Activated T-helper 1 cell treated with anti-CD3 and anti-CD28 coated beads, Interleukin-12 subunit alpha, Interleukin-12 subunit beta, Interleukin-2, Interleukin-4 antibody, amounts not matched to agents 30 ng/mL and 10 ng/mL and 1 ng/mL, durations not matched to agents 14 hours and 24 hours and 36 hours (primary cell): ENCODE measurements at regions of chr4 and their contacts with region 1.

Region 1: DNA sequence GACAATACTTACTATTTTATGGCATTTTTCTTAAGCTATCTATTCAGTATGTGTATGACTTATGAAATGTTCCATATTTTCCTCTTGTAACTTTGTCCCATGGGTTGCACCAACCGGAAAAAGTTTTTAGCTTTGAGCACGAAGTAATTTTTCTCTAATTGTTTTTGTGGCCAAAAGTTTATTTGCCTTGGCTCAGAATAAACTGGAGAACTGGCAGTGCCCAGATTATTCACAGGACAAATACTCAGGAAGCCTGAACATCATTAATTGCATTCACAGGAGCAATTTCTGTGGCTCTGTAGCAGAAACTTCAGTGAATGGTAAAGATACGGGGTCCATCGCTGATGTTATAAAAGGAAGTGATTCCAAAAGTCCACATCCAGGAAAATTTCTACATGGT is 184.5 kb downstream of the ARHGAP10 start:
- DNase-seq: no peak
- H3K4me3 Mint-ChIP-seq: no peak overlapping the region
- H3K27ac Mint-ChIP-seq: no peak overlapping the region
- H3K4me1 Mint-ChIP-seq: no peaks in the 10 kb centered on the region
- H3K27me3 Mint-ChIP-seq: no peaks in the 10 kb centered on the region

Region 2: GRCh38 chr4:147799986-147800555 is 116.3 kb before region 1 on chr4:
- intact Hi-C with region 1: no loop called
- DNase-seq: peak; percentile 70
- H3K4me3 Mint-ChIP-seq: peak overlapping the region; percentile 65
- H3K27ac Mint-ChIP-seq: peak overlapping the region; percentile 66
- H3K4me1 Mint-ChIP-seq: peaks cover 58% of the 10 kb centered on the region
- H3K27me3 Mint-ChIP-seq: peaks cover 5% of the 10 kb centered on the region

Region 3: DNA sequence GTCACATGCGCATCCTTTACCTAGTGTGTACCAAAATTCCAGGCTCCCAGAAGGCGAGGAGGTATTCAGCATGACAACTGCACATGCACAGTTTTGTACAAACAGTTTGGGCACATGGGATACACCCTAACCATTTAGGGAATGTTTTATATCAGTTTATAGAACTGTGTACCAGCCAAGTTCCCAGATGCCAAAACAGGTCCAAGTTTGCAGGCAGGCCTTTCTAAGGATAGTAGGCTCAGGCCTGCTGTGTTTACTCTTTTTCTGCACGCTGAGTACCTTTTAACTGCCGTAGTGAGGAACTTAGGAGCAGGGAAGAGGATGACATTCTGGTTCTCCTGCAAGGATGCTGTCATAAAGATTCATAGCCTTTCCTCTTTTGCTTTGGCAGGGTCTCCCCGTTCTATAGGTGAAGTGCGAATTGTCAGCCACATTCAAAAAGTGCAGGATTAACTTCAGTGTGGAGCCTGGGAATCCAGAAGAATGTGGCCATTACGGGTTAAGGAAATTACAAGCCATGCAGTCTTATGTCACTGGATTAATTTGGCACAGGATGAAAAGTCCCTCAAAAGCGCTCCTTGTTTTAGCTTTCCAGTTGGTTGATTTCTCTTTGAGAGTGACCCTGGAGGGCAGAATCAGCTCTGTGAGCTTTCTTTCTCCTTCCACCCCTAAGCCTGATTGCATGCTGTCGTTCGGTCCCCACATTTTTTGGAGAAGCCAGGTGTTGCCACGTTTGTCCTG is 75.4 kb after region 1 on chr4:
- intact Hi-C with region 1: loop called (anchors 2 kb)
- DNase-seq: no peak
- H3K4me3 Mint-ChIP-seq: no peak overlapping the region
- H3K27ac Mint-ChIP-seq: no peak overlapping the region
- H3K4me1 Mint-ChIP-seq: no peaks in the 10 kb centered on the region
- H3K27me3 Mint-ChIP-seq: peaks cover 4% of the 10 kb centered on the region